ENCODE measurements at regions of chr12 and their contacts with region 1.

Region 1: DNA sequence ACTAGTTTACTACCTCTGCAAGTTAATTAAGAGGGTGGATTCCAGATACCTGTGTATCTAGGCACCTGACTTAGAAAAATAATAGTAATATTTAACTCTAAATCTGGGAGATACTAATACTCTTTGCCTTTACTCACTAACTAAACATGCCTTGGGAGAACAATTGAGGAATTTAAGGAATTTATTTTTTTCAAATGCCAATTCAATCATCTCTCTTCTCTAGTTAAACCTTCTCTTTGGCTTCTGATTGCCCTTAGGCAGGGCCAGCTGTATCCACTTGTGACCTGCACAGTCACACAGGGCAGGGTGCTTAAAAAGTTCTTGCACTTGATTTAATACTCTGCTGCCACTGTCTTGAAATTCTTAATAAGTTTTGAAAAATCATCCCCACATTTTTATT is 142.4 kb downstream of the PLCZ1 start:
- DNase-seq: peak; percentile 60
- ATAC-seq: peak; percentile 75
- H3K4me3 ChIP-seq: no peak overlapping the region
- H3K27ac ChIP-seq: no peak overlapping the region
- H3K4me1 ChIP-seq: peaks cover 10% of the 10 kb centered on the region; the same call in 1 of the 2 replicates
- H3K27me3 ChIP-seq: no peaks in the 10 kb centered on the region
- CTCF ChIP-seq: no peak

Region 2: GRCh38 chr12:18620986-18621385 is 25.6 kb after region 1 on chr12:
- CTCF ChIA-PET with region 1: no interaction called
- POLR2A ChIA-PET with region 1: no interaction called
- intact Hi-C with region 1: no loop called
- DNase-seq: no peak
- ATAC-seq: no peak
- H3K4me3 ChIP-seq: no peak overlapping the region
- H3K27ac ChIP-seq: no peak overlapping the region
- H3K4me1 ChIP-seq: no peaks in the 10 kb centered on the region
- H3K27me3 ChIP-seq: no peaks in the 10 kb centered on the region
- CTCF ChIP-seq: no peak

Region 3: DNA sequence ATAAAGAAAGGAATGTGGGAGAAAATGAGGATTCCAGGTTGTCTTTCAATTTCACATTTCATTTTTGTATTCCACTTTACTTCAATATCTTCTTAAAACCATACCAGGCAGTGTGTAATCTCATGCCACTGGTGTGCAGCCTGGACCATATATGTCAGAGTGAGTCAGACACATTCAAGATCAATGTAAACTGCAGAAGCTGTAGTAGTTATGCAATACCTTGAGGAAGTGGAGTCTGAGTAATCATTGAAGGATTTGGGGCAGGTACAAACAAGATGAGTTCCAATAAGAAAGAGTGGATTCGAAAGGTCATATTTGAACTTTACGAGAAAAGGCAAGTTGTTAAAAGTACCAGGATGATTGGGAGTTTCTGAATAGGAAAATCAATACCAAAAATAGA is 128.3 kb after region 1 on chr12:
- CTCF ChIA-PET with region 1: no interaction called
- POLR2A ChIA-PET with region 1: no interaction called
- intact Hi-C with region 1: loop called (anchors 10 kb)
- DNase-seq: peak; percentile 89
- ATAC-seq: peak; percentile 89
- H3K4me3 ChIP-seq: no peak overlapping the region
- H3K27ac ChIP-seq: peak overlapping the region; percentile 81
- H3K4me1 ChIP-seq: peaks cover 31% of the 10 kb centered on the region
- H3K27me3 ChIP-seq: no peaks in the 10 kb centered on the region
- CTCF ChIP-seq: no peak